ENCODE measurements at regions of chr1 and their contacts with region 1.

Region 1: DNA sequence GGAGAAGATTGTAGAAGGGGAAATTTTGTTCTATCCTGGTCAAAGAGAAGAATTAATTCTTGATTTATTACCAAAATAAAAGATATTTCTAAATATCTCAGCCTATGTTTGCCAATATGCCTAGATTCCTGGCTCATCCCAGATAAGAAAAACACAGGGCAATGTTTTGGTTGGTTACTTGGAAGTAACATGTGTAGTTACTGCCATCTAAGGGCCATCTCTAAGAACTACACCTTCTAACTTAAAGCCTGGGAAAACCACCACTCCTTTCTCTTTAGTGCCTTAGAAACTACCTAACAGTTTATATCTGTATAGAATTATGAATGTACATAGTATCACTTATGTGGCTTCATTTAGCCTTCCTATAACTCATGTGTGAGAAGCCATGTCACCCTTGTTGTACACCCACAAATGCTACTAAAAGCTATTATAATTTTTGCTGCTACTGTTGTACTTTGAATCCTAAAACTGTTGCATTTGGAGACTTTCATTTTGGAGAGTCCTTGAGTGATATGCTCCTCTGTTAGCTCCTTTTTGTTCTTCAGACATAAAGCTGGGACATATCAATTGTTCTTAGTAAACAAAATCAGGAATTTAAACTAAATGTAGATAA is 4.5 kb downstream of the AIM2 start:
- H3K4me3 ChIP-seq: no peak overlapping the region
- H3K27ac ChIP-seq: no peak overlapping the region
- H3K4me1 ChIP-seq: no peaks in the 10 kb centered on the region
- CTCF ChIP-seq: no peak

Region 2: DNA sequence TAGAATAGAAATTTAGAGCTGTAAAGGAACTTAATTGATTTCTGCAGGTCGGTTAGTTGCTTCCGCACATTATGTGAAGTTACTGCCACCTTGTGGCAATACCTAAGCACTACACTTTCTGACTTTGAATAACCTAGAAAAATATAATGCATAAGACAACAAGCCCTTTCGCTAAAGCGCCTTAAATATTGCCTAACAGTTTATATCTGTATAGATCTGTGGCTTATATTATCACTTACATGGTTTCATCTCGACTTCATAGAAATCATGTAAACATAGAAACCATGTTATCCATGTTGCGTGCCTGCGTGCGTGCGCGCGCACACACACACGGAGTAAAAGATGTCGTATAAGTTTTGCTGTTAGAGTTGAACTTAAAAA is 73.3 kb before region 1 on chr1:
- CTCF ChIA-PET with region 1: interaction called, 12 read pairs
- POLR2A ChIA-PET with region 1: interaction called, 3 read pairs
- H3K4me3 ChIP-seq: peak overlapping the region; percentile 28
- H3K27ac ChIP-seq: no peak overlapping the region
- H3K4me1 ChIP-seq: peaks cover 8% of the 10 kb centered on the region; the same call in 1 of the 2 replicates
- CTCF ChIP-seq: peak; percentile 25; the same call in 1 of the 2 replicates

Region 3: GRCh38 chr1:159058751-159059150 is 13.3 kb before region 1 on chr1:
- CTCF ChIA-PET with region 1: interaction called, 16 read pairs
- POLR2A ChIA-PET with region 1: no interaction called
- H3K4me3 ChIP-seq: no peak overlapping the region
- H3K27ac ChIP-seq: no peak overlapping the region
- H3K4me1 ChIP-seq: no peaks in the 10 kb centered on the region
- CTCF ChIP-seq: no peak

Region 4: GRCh38 chr1:159122005-159122621 is 50.0 kb after region 1 on chr1:
- CTCF ChIA-PET with region 1: no interaction called
- POLR2A ChIA-PET with region 1: no interaction called
- H3K4me3 ChIP-seq: no peak overlapping the region
- H3K27ac ChIP-seq: no peak overlapping the region
- H3K4me1 ChIP-seq: no peaks in the 10 kb centered on the region
- CTCF ChIP-seq: no peak

Measured in HEK293 (cell line).